Activated naive CD4-positive, alpha-beta T cell treated with anti-CD3 and anti-CD28 coated beads for 36 hours (primary cell): ENCODE measurements at regions of chr7 and their contacts with region 1.

Region 1: DNA sequence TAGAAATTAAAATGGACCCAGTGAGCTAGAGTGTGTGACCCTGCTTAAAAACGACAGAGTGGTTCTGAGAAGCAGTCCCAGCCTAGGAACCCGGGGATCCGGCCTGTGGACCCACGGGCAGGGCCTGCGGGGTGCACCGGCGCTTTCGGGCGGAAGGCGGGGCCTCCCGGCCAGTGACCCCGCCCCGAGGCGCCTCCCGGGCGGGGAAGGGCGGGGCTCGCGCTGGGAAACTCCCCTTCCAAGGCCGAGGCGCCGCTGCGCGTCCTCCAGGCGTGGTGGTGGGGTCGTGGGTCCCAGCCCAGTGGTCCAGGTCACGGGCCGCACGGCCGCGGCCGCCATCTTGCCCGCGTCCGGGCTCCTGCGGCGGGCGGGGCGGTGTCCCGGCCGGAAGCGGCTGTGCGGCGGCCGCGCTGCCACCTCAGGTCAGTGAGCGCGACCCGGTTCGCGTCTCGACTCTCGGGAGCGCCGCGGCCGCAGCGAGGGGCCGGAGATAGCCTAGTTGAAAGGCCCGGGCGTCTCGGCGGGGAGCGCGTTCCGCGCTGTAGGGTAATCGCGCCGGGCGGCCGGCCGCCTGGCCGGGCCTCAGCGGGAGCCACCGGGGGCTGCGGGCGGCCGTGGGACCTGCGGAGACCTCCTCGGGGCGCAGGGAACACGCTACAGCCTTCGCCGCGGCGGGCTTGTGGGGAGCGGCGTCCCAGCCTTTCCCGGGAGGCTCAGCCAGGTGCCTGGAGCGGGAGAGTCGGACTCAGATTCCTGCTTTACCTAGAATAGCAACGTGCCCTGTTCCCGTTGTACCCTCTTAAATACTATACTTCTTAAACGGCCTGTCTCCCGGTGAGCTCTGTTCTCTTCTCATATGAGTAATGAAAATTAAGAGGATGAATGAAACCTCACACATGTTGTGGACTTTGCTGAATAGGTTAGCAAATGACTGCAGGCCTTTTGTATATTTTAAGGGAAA is at the start of gene MIOS:
- DNase-seq: peak; percentile 76
- H3K4me3 Mint-ChIP-seq: peak within 1 kb of the TSS; percentile 80
- H3K27ac Mint-ChIP-seq: peak within 1 kb of the TSS; percentile 63
- H3K4me1 Mint-ChIP-seq: peaks cover 30% of the 10 kb centered on the region
- H3K27me3 Mint-ChIP-seq: no peaks in the 10 kb centered on the region
- total RNA-seq, gene MIOS: 40.6 to 43.0 TPM

Region 2: GRCh38 chr7:7157177-7157886 is 409.6 kb before region 1 on chr7:
- CTCF ChIA-PET with region 1: no interaction called
- intact Hi-C with region 1: loop called (anchors 2 kb)
- DNase-seq: peak; percentile 67
- H3K4me3 Mint-ChIP-seq: peak overlapping the region; percentile 61
- H3K27ac Mint-ChIP-seq: peak overlapping the region; percentile 81
- H3K4me1 Mint-ChIP-seq: peaks cover 49% of the 10 kb centered on the region
- H3K27me3 Mint-ChIP-seq: no peaks in the 10 kb centered on the region

Region 3: GRCh38 chr7:7799138-7799537 is 232.2 kb after region 1 on chr7:
- CTCF ChIA-PET with region 1: no interaction called
- intact Hi-C with region 1: no loop called
- DNase-seq: no peak
- H3K4me3 Mint-ChIP-seq: no peak overlapping the region
- H3K27ac Mint-ChIP-seq: no peak overlapping the region
- H3K4me1 Mint-ChIP-seq: no peaks in the 10 kb centered on the region
- H3K27me3 Mint-ChIP-seq: no peaks in the 10 kb centered on the region

Region 4: DNA sequence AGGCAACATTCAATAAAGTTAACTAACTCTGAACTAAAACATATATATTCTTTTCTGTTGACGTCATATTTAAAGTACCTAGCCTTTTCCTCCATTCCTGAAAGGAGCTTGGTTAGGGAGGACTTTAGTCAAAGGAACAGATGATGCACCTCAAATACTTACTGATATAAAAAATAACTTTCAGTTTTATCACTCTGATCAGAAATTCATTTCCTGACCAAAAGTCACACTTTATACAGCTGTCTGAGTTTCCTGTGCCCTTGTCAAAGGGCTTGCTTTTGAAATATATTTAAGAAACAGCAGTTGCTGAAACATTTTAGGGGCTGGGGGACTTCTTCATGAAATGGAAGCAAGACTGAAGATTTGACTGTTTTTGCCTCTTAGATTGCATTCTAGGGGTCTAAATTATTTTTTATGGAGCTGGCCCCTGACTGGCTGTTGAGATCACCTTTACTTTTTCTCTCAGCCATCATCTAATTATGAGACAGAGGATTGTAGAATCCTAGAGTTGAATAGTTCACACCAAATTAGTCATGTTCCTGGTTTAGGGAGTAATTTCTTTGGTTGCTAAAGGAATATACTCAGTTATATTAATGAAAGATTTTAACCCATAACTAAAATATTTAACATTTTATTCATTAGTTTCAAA is 448.3 kb after region 1 on chr7:
- CTCF ChIA-PET with region 1: no interaction called
- intact Hi-C with region 1: loop called (anchors 10 kb)
- DNase-seq: no peak
- H3K4me3 Mint-ChIP-seq: peak overlapping the region; percentile 4
- H3K27ac Mint-ChIP-seq: peak overlapping the region; percentile 68
- H3K4me1 Mint-ChIP-seq: peaks cover 47% of the 10 kb centered on the region
- H3K27me3 Mint-ChIP-seq: no peaks in the 10 kb centered on the region

Region 5: DNA sequence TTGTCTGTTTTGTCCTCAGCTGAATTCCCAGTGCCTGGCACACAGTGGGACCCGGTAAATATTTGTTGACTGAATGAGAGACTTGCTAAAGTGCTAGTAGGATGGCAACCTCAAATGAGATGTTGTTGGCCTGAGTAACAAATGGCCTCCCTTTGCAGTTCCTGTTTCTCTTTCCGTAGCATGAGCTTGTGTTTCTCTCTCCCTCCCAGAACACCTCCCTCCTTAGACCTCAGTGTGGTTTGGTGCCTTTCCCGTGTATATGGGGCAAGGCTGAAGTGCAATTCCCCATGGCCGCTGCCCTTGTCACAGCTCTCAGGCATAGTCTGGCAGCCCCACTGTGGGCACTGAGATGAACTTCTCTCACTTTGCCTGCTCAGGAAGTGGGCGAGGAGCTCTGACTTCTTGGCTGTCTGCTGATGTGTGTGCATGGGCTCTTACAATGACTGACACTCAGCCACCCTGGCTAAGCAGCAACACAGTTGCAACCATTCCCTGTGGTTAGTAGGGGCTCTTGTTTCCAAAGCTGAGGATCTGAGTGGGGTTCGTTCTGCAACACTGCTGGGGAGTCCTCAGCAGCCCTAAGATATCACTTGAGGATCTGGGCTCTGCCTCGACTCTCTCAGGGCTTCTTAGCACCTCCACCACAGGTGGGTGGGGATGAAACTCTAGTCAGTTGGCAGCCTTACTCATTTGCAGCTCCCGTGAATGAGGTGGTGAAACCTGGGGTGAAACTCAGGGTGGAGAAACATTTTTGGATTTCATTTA is 558.9 kb after region 1 on chr7:
- CTCF ChIA-PET with region 1: no interaction called
- intact Hi-C with region 1: loop called (anchors 5 kb)
- DNase-seq: peak; percentile 86
- H3K4me3 Mint-ChIP-seq: peak overlapping the region; percentile 71
- H3K27ac Mint-ChIP-seq: peak overlapping the region; percentile 96
- H3K4me1 Mint-ChIP-seq: peaks cover 57% of the 10 kb centered on the region
- H3K27me3 Mint-ChIP-seq: no peaks in the 10 kb centered on the region